ENCODE measurements at regions of chr7 and their contacts with region 1.

Region 1: DNA sequence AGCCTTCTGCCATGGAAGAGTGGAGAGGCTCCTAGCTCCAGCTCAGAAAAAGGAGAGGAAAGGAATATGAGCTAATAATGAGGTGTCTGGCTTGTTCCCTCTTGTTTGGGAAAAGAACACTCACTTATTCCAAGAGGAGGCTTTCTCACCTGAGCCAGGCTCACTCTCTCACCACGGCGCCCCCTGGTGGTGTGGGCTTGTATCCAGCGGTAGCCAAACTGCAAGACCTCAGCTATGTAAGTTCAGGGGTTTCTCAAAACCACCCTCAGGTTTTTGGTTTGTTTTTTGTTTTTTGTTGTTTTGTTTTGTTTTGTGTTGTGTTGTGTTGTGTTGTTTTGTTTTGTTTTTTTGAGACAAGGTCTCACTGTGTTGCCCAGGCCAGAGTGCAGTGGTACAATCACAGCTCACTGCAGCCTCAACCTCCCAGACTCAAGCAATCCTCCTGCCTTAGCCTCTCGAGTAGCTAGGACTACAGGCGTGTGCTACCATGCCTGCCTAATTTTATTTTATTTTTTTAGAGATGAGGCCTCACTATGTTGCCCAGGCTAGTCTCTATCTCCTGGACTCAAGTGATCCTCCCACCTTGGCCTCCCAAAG is 124.0 kb downstream of the TMEM130 start:
- DNase-seq: peak; percentile 81
- H3K4me3 ChIP-seq: no peak overlapping the region
- H3K27ac ChIP-seq: no peak overlapping the region
- H3K4me1 ChIP-seq: no peaks in the 10 kb centered on the region
- CTCF ChIP-seq: peak; percentile 95

Region 2: DNA sequence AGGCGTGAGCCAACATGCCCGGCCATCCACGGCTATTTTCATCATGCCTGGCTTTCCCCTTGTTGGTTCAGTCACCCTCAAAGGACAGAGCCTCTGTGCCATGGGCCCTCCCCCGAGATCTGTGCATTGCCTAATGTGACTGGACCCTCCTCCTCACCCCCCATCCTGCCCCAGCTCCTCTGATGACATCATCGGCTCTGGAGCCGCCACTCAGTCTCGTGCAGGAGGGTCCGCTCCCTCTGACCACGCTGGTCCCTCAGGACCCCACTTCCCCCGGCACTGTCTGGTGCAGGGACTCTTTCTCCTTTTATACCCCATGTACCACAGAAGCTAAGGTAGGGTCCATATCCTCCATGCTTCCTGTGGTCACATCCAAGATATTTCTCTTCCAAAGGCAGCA is 311.7 kb before region 1 on chr7:
- CTCF ChIA-PET with region 1: no interaction called
- POLR2A ChIA-PET with region 1: interaction called, 3 read pairs
- intact Hi-C with region 1: loop called (anchors 1 kb)
- DNase-seq: no peak
- H3K4me3 ChIP-seq: no peak overlapping the region
- H3K27ac ChIP-seq: no peak overlapping the region
- H3K4me1 ChIP-seq: peaks cover 9% of the 10 kb centered on the region
- CTCF ChIP-seq: no peak

Measured in OCI-LY7 (cell line).